ENCODE measurements at regions of chr12 and their contacts with region 1.

Region 1: DNA sequence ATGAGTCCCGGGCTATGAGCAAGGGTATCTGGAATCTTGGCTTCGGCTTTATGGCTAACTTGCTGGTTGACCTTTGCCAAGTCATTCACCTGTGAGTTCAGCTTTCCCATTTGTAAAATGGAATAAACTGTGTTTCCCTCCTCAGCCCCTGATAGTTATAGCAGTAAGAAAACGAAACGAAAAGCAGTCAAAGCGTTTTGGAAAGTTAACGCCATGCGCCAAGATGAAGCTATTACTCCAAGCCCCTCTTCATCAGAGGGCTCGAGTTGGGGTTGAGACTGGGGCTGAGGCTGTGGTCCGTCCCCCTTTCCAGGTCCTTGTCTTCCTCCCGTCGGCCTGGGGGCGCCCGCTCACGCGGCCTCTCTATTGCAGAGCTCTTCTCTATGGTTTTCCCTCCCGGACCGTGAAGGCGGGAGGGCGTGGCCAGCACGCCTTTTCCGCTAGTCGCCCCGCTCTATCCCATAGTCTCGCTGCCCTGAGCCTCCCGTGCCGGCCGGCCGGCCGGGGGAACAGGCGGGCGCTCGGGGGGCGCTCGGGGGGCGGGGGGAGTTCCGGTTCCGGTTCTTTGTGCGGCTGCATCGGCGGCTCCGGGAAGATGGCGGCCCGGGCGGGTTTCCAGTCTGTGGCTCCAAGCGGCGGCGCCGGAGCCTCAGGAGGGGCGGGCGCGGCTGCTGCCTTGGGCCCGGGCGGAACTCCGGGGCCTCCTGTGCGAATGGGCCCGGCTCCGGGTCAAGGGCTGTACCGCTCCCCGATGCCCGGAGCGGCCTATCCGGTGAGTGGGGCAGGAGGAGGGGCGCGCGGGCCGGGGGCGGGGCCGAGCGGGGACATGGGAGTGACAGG is at the start of gene SMARCD1:
- DNase-seq: peak; percentile 82
- ATAC-seq: peak; percentile 89
- H3K4me3 Mint-ChIP-seq: peak within 1 kb of the TSS; percentile 95
- H3K27ac Mint-ChIP-seq: peak within 1 kb of the TSS; percentile 96
- H3K4me1 Mint-ChIP-seq: peaks cover 23% of the 10 kb centered on the region
- H3K27me3 Mint-ChIP-seq: no peaks in the 10 kb centered on the region
- total RNA-seq, gene SMARCD1: 57.2 to 68.1 TPM

Region 2: DNA sequence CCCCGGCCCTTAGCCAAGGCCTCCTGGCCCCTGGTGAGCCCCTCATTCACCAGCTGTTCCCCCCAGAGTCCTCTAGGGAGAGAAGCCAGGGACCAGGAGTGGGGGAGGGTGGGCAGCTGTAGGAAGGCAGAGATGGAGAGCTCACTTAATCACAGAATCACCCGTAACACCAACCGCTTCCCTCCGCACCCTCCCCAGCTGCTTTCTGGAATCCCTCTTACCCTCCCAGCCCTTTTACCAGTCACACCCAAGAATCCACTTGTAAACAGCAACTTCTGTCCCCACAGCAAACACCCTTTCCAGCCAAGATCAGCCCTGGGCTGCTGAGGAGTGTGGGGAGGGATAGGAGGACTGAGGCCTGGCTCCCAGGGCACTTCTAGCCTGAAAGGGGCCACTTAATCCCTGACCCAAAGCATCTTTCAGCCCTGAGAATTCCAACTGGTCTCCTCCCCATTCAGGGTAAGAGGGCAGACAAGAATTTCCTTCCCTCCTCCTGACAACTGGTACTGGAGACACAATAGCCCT is 275.6 kb before region 1 on chr12:
- POLR2A ChIA-PET with region 1: no interaction called
- DNase-seq: no peak
- ATAC-seq: no peak
- H3K4me3 Mint-ChIP-seq: no peak overlapping the region
- H3K27ac Mint-ChIP-seq: no peak overlapping the region
- H3K4me1 Mint-ChIP-seq: peaks cover 10% of the 10 kb centered on the region
- H3K27me3 Mint-ChIP-seq: no peaks in the 10 kb centered on the region

Region 3: DNA sequence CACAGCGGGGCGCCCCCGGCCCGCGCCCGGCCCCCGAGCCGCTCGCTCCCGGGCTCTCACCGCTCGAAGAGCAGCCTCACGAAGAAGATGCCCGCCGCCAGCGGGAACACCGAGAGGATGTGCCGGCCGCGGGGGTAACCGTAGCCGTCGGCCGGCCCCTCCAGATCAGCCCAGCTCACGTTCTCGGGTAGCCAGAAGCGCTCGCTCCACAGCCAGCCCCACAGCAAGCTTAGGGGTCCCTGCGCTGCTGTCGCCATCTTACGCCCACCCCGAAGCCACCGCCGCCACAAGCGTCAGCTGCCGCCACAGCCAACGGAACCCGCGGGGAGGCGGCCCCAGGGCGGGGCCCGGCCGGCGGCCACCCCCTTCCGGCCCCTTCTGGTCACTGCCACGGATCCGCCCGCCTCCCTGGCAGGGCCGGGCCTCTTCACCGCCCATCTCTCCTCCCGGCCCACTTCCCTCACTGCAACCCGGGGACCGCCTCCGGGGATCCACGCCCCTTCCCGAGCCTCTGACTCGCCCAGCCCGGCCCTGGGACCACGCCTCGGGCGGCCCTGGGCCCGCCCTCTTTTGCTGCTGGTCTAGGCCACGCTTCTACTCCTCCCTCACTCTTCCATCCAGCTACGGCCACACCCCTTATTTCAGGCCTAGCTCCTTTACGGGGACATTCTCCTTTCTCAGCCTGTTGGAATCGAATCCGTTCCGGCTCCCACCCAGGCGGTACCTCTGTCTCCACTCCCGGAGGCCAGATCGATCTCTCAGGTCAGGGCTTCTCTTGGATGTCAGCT is 82.2 kb after region 1 on chr12 and contains the start of gene CERS5:
- POLR2A ChIA-PET with region 1: interaction called, 18 read pairs
- DNase-seq: peak; percentile 97
- ATAC-seq: peak; percentile 98
- H3K4me3 Mint-ChIP-seq: peak within 1 kb of the TSS; percentile 97
- H3K27ac Mint-ChIP-seq: peak within 1 kb of the TSS; percentile 95
- H3K4me1 Mint-ChIP-seq: peaks cover 11% of the 10 kb centered on the region
- H3K27me3 Mint-ChIP-seq: no peaks in the 10 kb centered on the region
- total RNA-seq, gene CERS5: 47.1 to 53.0 TPM

Region 4: GRCh38 chr12:50442178-50442908 is 357.3 kb after region 1 on chr12:
- POLR2A ChIA-PET with region 1: no interaction called
- DNase-seq: no peak
- ATAC-seq: no peak
- H3K4me3 Mint-ChIP-seq: no peak overlapping the region
- H3K27ac Mint-ChIP-seq: peak overlapping the region; percentile 4
- H3K4me1 Mint-ChIP-seq: peaks cover 2% of the 10 kb centered on the region
- H3K27me3 Mint-ChIP-seq: no peaks in the 10 kb centered on the region

Measured in activated naive CD8-positive, alpha-beta T cell treated with anti-CD3 and anti-CD28 coated beads, Interleukin-2, amount 10 ng/mL, durations not matched to agents 7 days and 5 days (primary cell).